Motor neuron (in vitro differentiated cells): ENCODE measurements at regions of chr10 and their contacts with region 1.

Region 1: DNA sequence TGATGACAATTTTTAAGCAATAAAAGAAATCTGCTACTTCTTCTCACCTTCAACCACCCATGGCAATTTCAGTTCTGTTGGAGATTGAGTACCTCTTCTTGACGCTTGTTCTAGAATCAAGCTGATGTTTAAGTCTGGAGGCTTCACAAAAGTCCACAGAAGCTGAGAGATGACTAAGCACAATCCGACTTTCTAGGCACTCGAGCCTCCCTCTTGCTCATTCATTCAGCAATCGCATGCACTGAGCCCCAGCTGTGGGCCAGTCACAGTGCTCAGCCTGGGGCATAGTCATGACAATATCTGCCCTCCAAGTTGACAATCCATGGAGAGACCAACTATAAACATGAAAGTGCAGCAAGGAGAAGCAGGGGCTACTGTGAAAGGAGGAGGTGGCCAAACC is 103.2 kb downstream of the IPMK start:
- ATAC-seq: peak in 2 of 8 experiments; percentile 36 to 38
- H3K4me3 ChIP-seq: no peak overlapping the region
- H3K27ac ChIP-seq: no peak overlapping the region
- H3K4me1 ChIP-seq: no peaks in the 10 kb centered on the region

Region 2: GRCh38 chr10:58393317-58393716 is 228.8 kb after region 1 on chr10:
- in situ Hi-C with region 1: loop called in 1 of 9 experiments (anchors 10 kb)
- ATAC-seq: no peak
- H3K4me3 ChIP-seq: no peak overlapping the region
- H3K27ac ChIP-seq: no peak overlapping the region
- H3K4me1 ChIP-seq: no peaks in the 10 kb centered on the region